Naive thymus-derived CD4-positive, alpha-beta T cell (primary cell): ENCODE measurements at regions of chr3 and their contacts with region 1.

Region 1: DNA sequence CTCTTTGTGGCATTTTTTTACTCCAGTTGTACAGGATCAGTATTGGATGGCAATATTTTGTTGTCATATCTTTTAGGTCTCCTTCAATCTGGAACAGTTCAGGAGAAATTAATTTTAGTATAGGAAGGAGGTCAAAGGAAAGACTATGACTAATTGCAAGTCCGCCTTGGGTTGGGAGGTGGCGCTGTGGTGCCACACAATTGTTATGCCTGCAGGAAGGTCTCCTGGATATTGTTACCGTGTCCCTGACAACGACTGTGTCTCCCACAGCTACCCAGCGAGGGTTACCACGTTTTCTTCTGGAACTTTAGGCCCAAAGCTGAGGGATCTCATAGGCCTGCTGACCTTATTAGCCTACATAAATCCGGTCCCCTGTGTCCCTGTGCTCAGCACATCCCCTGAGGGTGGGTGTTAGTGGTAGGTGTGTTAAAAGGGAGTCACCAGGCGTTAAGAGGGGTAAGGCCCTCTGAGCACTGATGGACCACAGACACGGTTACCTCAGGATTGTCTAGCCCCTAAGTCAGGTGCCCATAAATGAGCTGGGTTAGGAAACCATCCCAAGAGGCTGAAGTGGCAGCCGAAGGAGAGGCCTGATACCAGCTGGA is 31.5 kb downstream of the KCNAB1 start:
- DNase-seq: peak in 7 of 9 donors; percentile 18 to 40 (median 27)
- ATAC-seq: peak; percentile 58
- H3K4me3 ChIP-seq: no peak overlapping the region
- H3K4me3 Mint-ChIP-seq: no peak overlapping the region
- H3K27ac ChIP-seq: no peak overlapping the region
- H3K27ac Mint-ChIP-seq: no peak overlapping the region
- H3K4me1 ChIP-seq: no peaks in the 10 kb centered on the region
- H3K4me1 Mint-ChIP-seq: peaks cover 0 to 7% (median 0%) of the 10 kb centered on the region in 7 donors
- H3K27me3 ChIP-seq: no peaks in the 10 kb centered on the region
- H3K27me3 Mint-ChIP-seq: peaks cover 0 to 18% (median 0%) of the 10 kb centered on the region in 5 donors

Region 2: GRCh38 chr3:156382458-156383346 is 230.8 kb after region 1 on chr3:
- CTCF ChIA-PET with region 1: no interaction called
- POLR2A ChIA-PET with region 1: no interaction called
- intact Hi-C with region 1: loop called (anchors 1 kb)
- DNase-seq: no peak
- ATAC-seq: no peak
- H3K4me3 ChIP-seq: no peak overlapping the region
- H3K4me3 Mint-ChIP-seq: no peak overlapping the region
- H3K27ac ChIP-seq: no peak overlapping the region
- H3K27ac Mint-ChIP-seq: no peak overlapping the region
- H3K4me1 ChIP-seq: no peaks in the 10 kb centered on the region
- H3K4me1 Mint-ChIP-seq: no peaks in the 10 kb centered on the region
- H3K27me3 ChIP-seq: no peaks in the 10 kb centered on the region
- H3K27me3 Mint-ChIP-seq: peaks cover 0 to 38% (median 10%) of the 10 kb centered on the region in 5 donors

Region 3: DNA sequence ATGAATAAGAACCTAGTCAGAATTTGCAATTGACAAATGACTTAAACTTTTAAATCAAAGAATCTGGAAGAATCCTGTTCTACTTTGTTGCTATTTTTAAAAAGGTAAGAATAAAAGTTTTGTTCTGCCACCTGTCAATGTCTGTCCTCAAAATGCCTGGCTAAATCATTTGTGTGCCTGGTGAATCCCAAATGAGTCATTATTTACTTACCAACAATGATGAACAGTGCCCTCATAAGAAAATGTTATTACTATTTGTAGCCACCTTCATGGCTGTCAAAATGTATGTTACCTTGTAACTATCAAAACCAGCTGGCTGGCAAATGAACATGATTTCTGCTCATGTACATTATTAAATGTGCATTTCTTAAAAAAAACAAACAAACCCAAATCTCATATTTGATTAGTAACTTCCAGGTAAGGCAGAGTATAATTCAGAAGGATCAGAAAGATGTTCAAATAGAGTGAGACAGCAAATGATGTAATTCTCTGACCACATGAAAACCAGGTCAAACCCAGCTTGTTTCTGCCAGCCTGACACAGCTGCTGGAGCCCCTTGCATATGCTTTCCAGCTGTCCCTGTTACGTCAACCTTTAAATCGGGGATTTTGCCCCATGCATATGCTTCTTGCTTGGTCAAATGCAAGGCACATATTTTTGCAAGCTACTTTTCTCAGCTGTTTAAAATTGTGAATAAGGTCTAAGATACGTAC is 265.1 kb after region 1 on chr3:
- CTCF ChIA-PET with region 1: no interaction called
- POLR2A ChIA-PET with region 1: no interaction called
- intact Hi-C with region 1: no loop called
- DNase-seq: no peak
- ATAC-seq: no peak
- H3K4me3 ChIP-seq: no peak overlapping the region
- H3K4me3 Mint-ChIP-seq: no peak overlapping the region
- H3K27ac ChIP-seq: no peak overlapping the region
- H3K27ac Mint-ChIP-seq: no peak overlapping the region
- H3K4me1 ChIP-seq: no peaks in the 10 kb centered on the region
- H3K4me1 Mint-ChIP-seq: no peaks in the 10 kb centered on the region
- H3K27me3 ChIP-seq: no peaks in the 10 kb centered on the region
- H3K27me3 Mint-ChIP-seq: peaks cover 4 to 38% (median 13%) of the 10 kb centered on the region in 5 donors

Region 4: DNA sequence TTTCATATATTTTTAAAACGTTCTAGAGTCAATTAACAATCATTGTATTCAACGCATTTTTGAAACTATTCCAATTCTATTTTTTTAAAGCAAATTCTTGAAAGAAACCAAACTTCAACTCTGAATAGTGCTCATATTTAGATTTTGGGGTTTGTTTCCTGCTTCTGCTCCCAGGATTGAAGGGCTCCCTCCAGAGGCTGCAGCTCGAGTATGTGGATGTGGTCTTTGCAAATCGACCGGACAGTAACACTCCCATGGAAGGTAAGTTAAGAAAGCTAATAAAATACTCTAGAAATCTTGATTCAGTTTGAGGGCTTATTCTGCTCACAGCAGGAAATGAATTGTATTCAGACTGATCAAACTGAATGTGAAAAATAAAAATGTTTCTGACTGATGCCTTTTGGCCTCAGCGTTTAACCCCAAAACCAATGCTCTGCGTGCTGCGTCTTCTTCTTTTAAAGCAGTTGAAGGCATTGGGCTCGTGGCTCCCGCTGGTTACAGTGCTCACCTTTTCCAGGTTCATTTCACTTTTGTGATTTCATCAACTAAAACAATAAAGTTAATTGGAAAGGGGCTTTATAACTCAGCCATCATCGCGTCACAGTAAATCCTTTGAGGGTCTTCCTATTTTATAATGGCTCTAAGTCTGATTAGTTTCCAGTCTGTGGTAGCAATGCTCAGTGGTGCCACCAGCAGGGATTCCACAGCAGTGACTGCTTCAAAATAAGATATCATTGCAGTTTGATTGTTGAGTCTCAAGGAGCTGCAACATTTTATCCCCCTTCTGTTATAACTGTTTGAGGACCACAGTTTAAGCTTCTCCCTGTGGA is 322.8 kb after region 1 on chr3:
- CTCF ChIA-PET with region 1: no interaction called
- POLR2A ChIA-PET with region 1: no interaction called
- intact Hi-C with region 1: loop called in 1 of 2 experiments (anchors 1 kb)
- DNase-seq: peak in 2 of 9 donors; percentile 3 to 12
- ATAC-seq: no peak
- H3K4me3 ChIP-seq: no peak overlapping the region
- H3K4me3 Mint-ChIP-seq: peak overlapping the region in 3 of 10 donors; percentile 5 to 33 (median 21)
- H3K27ac ChIP-seq: no peak overlapping the region
- H3K27ac Mint-ChIP-seq: peak overlapping the region in 2 of 9 donors; percentile 5 to 22
- H3K4me1 ChIP-seq: no peaks in the 10 kb centered on the region
- H3K4me1 Mint-ChIP-seq: peaks cover 0 to 5% (median 0%) of the 10 kb centered on the region in 7 donors
- H3K27me3 ChIP-seq: no peaks in the 10 kb centered on the region
- H3K27me3 Mint-ChIP-seq: peaks cover 0 to 71% (median 9%) of the 10 kb centered on the region in 5 donors

Region 5: DNA sequence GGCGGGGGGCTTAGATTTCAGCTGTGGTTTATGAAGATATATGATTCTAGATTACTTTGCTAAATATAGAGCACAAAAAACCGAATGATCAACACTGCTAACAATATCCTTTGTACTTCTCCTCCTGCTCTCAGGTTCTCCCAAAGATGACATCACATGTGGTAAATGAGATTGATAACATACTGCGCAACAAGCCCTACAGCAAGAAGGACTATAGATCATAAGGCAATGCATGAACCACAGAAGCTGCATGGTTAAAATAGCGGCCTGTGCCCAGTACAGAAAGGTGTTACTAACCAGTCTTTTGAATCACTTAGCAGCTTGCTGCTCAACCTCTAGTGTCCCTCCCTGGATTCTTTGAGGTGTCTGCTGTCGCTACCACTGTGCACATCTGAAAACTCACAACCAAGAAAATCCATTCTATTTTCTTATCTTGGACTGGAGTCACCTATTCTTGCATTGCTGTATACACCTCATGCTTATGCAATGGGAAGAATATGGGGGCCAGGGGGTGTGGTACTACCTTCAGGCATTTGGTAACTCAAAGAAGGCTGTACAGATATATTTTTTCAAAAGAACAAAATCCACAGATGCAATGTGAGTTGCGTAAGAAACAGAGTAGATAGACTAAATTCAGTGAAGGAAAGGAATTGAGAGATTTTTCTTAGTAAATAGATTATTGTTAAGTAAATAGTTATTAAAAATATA is 384.8 kb after region 1 on chr3:
- CTCF ChIA-PET with region 1: interaction called, 11 read pairs
- POLR2A ChIA-PET with region 1: no interaction called
- intact Hi-C with region 1: loop called (anchors 1 kb)
- DNase-seq: no peak
- ATAC-seq: no peak
- H3K4me3 ChIP-seq: no peak overlapping the region
- H3K4me3 Mint-ChIP-seq: no peak overlapping the region
- H3K27ac ChIP-seq: no peak overlapping the region
- H3K27ac Mint-ChIP-seq: no peak overlapping the region
- H3K4me1 ChIP-seq: no peaks in the 10 kb centered on the region
- H3K4me1 Mint-ChIP-seq: peaks cover 0 to 14% (median 0%) of the 10 kb centered on the region in 7 donors
- H3K27me3 ChIP-seq: no peaks in the 10 kb centered on the region
- H3K27me3 Mint-ChIP-seq: no peaks in the 10 kb centered on the region

Region 6: GRCh38 chr3:156681002-156681401 is 529.1 kb after region 1 on chr3:
- CTCF ChIA-PET with region 1: no interaction called
- POLR2A ChIA-PET with region 1: no interaction called
- intact Hi-C with region 1: loop called in 1 of 2 experiments (anchors 5 kb)
- DNase-seq: no peak
- ATAC-seq: peak; percentile 57
- H3K4me3 ChIP-seq: no peak overlapping the region
- H3K4me3 Mint-ChIP-seq: peak overlapping the region in 7 of 10 donors; percentile 19 to 81 (median 54)
- H3K27ac ChIP-seq: no peak overlapping the region
- H3K27ac Mint-ChIP-seq: peak overlapping the region in 1 of 9 donors; percentile 50
- H3K4me1 ChIP-seq: peaks cover 51 to 55% of the 10 kb centered on the region in 2 donors
- H3K4me1 Mint-ChIP-seq: peaks cover 58 to 92% (median 89%) of the 10 kb centered on the region in 7 donors
- H3K27me3 ChIP-seq: no peaks in the 10 kb centered on the region
- H3K27me3 Mint-ChIP-seq: no peaks in the 10 kb centered on the region

Region 7: DNA sequence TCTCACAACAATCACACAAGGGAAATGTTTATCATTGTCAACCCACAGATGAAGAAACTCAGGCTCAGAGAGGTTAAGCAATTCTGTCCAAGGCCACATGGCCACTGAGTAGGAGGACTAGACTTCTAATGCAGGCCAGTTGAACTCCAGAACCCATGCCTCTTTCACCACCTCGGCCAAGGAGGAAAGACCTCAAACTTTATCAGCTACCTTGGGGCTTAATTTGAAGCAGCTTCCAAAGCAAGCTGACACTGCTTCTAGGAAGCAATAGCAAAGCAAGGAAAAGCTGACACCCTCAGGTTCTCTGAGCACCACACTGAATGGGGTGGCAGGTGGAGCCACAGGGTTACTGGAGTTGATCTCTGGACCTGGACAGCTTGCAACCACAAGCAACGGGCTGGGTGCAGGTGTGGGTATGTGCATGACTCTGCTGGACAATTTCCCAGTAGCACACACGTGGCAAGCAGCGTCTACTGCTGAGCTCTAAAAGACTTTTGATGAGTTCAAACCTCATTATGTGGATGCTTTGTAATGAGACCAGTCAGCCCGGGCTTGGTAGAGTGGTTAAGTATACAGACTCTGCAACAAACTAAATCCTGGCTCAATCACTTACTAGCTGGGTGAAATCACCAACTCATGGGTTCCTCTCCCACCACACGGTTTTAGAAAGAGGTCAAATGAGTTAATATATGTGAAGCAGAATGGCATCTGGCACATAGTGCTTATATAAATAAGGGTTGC is 984.9 kb after region 1 on chr3:
- CTCF ChIA-PET with region 1: interaction called, 19 read pairs
- POLR2A ChIA-PET with region 1: interaction called, 5 read pairs
- intact Hi-C with region 1: loop called (anchors 1 kb)
- DNase-seq: no peak
- ATAC-seq: no peak
- H3K4me3 ChIP-seq: no peak overlapping the region
- H3K4me3 Mint-ChIP-seq: peak overlapping the region in 2 of 10 donors; percentile 65 to 80
- H3K27ac ChIP-seq: peak overlapping the region; percentile 14
- H3K27ac Mint-ChIP-seq: peak overlapping the region in 7 of 9 donors; percentile 5 to 91 (median 78)
- H3K4me1 ChIP-seq: peaks cover 6 to 31% of the 10 kb centered on the region in 2 donors
- H3K4me1 Mint-ChIP-seq: peaks cover 3 to 65% (median 21%) of the 10 kb centered on the region in 7 donors
- H3K27me3 ChIP-seq: no peaks in the 10 kb centered on the region
- H3K27me3 Mint-ChIP-seq: no peaks in the 10 kb centered on the region

Region 8: DNA sequence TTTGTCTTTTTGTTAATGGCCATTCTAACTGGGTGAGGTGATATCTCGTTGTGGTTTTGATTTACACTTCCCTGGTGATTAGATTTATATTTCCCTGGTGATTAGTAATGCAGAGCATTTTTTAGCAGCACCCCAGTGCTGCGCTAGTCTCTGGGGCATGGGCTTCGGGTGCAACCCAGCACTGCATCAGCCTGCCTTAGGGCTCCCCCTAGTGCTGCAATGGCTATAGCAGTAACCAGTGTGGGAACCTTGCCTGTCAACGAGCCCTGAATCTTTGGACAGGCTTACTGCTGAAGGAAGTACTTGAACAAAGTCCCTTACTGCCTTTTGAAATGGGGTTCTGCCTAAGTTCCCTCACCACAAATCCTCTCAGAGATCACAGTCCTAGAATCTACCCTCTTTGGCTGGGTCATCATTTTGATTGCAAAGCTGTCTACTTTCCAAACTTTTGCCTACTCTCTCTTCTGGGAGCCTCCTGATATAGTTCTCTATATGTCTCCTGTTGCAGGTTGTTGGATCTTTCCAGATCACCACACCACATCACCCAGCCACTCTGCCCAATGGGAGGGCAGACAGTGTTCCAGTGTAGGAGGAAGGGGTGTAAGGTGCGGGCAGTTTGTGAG is 1087.3 kb after region 1 on chr3:
- CTCF ChIA-PET with region 1: interaction called, 6 read pairs
- POLR2A ChIA-PET with region 1: no interaction called
- intact Hi-C with region 1: loop called in 1 of 2 experiments (anchors 1 kb)
- DNase-seq: peak; percentile 42 to 72 (median 58)
- ATAC-seq: peak; percentile 100
- H3K4me3 ChIP-seq: no peak overlapping the region
- H3K4me3 Mint-ChIP-seq: no peak overlapping the region
- H3K27ac ChIP-seq: no peak overlapping the region
- H3K27ac Mint-ChIP-seq: no peak overlapping the region
- H3K4me1 ChIP-seq: no peaks in the 10 kb centered on the region
- H3K4me1 Mint-ChIP-seq: peaks cover 0 to 6% (median 4%) of the 10 kb centered on the region in 7 donors
- H3K27me3 ChIP-seq: no peaks in the 10 kb centered on the region
- H3K27me3 Mint-ChIP-seq: peaks cover 0 to 8% (median 0%) of the 10 kb centered on the region in 5 donors